ENCODE measurements at regions of chrX and their contacts with region 1.

Region 1: DNA sequence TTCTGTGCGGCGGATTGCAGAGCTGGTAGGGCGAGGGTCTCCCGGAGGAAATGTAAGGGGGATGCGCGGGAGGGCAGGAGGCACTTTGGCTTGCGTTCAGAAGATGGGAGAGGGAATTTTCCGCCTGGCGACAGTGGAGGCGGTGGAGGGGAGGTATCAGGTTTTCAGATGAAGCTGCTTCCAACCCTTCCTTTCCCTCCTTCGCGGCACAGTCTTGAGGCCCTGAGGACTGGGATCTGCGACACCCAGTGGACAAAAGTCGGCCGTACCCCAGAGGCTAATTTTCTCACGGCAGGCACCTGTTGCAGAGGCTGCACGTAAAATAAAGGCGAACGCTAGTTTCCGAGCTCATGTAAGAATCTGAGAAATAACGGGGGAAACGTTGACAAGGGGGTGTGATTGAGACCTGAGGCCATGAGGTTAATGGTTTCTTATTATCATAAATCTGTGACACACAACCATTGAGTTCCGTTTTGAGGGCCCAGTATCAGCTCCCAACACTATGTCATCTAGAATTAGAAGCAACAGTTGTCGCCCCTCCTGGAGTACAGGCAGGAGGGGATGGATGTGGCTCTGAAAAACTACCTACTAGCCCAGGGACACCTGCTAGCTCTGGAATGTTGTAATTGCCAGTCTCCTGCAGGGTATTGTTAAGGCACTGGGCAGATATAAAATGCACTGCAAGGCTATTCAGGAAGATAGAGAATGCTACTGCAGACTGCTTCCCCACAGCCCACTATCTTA is 1.1 kb downstream of the ZCCHC18 start:
- DNase-seq: peak; percentile 47
- CTCF ChIP-seq: peak; percentile 55

Region 2: DNA sequence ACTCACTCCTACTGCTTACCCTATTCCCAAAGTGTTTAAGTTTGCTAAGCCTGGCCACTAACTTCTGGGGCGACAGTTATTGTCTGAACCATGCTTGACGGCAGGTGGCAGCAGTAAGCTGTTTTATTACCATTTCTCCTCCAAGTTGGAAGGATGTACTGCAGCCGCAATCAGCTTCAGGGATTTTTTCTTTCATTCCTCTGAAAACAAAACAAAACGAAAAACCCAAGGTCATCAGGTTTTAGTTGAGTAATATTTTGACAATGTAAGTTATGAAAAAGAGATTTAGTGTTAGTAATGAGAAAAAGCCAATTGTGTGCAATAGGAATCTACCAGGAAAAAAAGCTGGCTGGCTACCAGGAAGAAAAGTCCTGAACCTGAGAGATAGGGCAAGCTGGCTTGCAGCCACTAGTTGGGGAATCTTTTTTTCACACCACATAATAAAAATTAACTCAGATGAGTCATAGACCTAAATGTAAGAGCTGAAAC is 268.2 kb before region 1 on chrX:
- in situ Hi-C with region 1: loop called (anchors 25 kb)
- DNase-seq: peak; percentile 40
- CTCF ChIP-seq: peak; percentile 61

Region 3: GRCh38 chrX:104018126-104018525 is 95.3 kb before region 1 on chrX:
- in situ Hi-C with region 1: loop called (anchors 25 kb)
- DNase-seq: no peak
- CTCF ChIP-seq: no peak

Measured in GM13976 (cell line).